Breast epithelium (tissue), 4 donors: ENCODE measurements at regions of chr12 and their contacts with region 1.

Region 1: DNA sequence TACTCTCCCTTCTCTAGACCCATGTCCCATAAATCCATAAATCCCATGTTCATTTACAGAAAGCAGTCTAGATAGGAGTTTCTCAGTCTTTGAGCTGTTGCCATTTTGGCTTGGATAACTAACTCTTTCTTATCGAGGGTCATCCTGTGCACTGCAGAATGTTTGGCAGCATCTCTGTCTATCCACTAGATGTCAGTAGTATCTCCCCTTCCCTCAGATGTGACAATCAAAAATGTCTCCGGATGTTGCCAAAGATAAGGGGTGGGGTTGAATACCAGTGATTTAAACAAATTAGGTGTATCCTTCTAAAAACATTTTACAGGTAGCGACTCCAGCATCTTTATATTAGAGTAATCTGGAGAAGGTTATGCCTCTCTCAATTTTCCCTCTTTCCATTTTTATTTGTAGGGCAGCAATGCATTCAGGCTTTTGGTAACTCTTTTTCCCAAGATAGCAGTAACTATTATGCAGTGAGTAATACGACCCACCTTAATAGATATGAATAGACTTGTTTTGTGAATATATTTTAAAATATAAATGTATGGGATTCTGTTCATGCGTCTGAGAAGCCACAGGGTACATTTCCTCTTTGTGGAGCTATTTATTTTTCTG is 100.7 kb downstream of the LRRK2 start:
- DNase-seq: no peak
- H3K4me3 ChIP-seq: no peak overlapping the region
- H3K27ac ChIP-seq: no peak overlapping the region
- H3K4me1 ChIP-seq: no peaks in the 10 kb centered on the region
- H3K27me3 ChIP-seq: no peaks in the 10 kb centered on the region
- CTCF ChIP-seq: no peak
- POLR2A ChIP-seq: no peak

Region 2: GRCh38 chr12:40663781-40664180 is 338.3 kb after region 1 on chr12:
- intact Hi-C with region 1: loop called (anchors 5 kb)
- DNase-seq: no peak
- H3K4me3 ChIP-seq: no peak overlapping the region
- H3K27ac ChIP-seq: no peak overlapping the region
- H3K4me1 ChIP-seq: no peaks in the 10 kb centered on the region
- H3K27me3 ChIP-seq: no peaks in the 10 kb centered on the region
- CTCF ChIP-seq: no peak
- POLR2A ChIP-seq: no peak